ENCODE measurements at regions of chr4 and their contacts with region 1.

Region 1: DNA sequence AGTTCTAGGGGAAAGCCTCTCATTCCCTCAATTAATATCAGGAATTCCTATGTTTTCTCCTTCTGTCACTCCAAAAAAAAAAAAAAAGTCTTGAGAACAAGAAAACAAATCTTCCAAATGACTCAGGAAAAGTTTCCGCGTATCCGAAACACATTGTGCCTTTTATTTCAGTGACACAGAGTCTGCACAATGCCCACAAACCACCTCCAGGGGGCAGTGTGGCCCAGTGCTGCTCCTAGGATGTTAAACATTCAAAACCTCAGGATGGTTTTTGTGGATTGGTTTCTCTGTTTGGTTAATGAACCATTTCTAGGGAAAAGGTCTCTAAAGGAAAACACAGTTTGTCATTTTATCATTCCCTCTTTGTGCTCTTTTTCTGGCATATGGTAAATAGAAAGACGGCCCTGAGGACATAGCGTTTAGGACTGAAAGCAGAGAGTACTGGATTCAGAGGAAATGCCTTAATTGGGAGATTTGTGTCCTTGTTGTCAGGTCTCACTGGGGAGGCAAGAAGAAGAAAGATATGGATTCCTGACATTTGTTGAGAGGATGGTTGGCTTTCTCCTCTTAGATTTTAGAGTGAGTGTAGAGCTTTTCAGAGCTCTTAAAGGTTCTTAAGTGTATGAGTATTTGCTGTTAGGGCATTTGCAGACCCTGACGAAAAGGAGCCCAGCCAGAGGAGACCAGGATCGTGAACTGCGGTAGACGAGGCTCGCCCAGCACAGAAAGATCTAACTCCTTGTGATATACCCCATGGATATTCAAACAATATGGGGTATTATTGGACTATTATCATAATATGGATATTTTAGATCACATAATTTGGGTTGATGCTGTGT is 65.7 kb upstream of the MAP9 start:
- DNase-seq: peak; percentile 76 to 90 (median 85)
- ATAC-seq: peak; percentile 76 to 95 (median 88)
- H3K4me3 ChIP-seq: peak overlapping the region in 9 of 12 donors; percentile 17 to 52 (median 33)
- H3K27ac ChIP-seq: peak overlapping the region in 10 of 12 donors; percentile 22 to 72 (median 38)
- H3K4me1 ChIP-seq: peaks cover 0 to 14% (median 3%) of the 10 kb centered on the region in 12 donors
- H3K27me3 ChIP-seq: no peaks in the 10 kb centered on the region
- CTCF ChIP-seq: peak; percentile 91 to 99 (median 97)
- POLR2A ChIP-seq: no peak

Region 2: DNA sequence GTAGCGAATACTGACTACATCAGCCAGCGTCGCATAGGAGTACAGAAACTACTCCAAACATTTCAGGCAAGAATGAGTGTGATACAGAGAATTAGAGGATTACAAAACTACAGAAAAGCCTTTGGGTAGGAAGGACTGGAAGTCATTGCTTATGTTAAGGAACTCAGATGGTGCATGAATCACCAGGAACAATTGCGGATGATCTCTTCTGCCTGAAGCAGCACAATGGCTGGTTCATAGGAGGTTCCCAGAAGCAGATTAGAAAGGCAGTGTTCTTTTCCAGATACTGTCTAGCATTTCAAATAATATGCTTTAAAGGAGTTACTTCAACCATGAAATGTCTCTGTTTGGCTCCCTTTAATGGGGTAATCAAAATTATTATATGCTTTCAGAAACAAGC is 23.2 kb before region 1 on chr4:
- intact Hi-C with region 1: no loop called
- DNase-seq: no peak
- ATAC-seq: no peak
- H3K4me3 ChIP-seq: no peak overlapping the region
- H3K27ac ChIP-seq: no peak overlapping the region
- H3K4me1 ChIP-seq: peaks cover 0 to 8% (median 0%) of the 10 kb centered on the region in 12 donors
- H3K27me3 ChIP-seq: no peaks in the 10 kb centered on the region
- CTCF ChIP-seq: no peak
- POLR2A ChIP-seq: no peak

Region 3: DNA sequence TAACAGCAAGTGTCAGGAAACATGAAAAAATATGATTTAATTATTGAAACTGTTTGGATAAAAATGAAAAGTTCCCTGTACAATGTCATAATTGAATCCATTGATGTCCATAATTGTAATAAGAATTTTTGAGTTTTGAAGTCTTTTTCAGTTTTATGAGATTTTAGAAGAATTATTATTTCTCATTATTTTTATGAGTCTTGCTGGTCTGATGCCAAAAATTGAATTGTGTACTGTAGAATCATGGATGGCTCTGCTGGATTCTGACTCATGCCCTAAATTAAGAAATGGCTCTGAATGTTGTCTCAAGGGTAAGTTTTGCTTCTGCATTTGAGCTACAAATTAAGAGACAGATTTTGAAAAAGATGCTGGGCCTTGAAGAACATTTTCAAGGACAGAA is 67.1 kb after region 1 on chr4:
- intact Hi-C with region 1: loop called in 2 of 10 experiments (anchors 5 kb)
- DNase-seq: no peak
- ATAC-seq: peak in 3 of 4 donors; percentile 49 to 79 (median 62)
- H3K4me3 ChIP-seq: no peak overlapping the region
- H3K27ac ChIP-seq: peak overlapping the region in 11 of 12 donors; percentile 5 to 75 (median 57)
- H3K4me1 ChIP-seq: peaks cover 0 to 77% (median 39%) of the 10 kb centered on the region in 12 donors
- H3K27me3 ChIP-seq: no peaks in the 10 kb centered on the region
- CTCF ChIP-seq: no peak
- POLR2A ChIP-seq: no peak

Region 4: GRCh38 chr4:155529272-155529671 is 86.8 kb after region 1 on chr4:
- intact Hi-C with region 1: loop called in 1 of 10 experiments (anchors 5 kb)
- DNase-seq: no peak
- ATAC-seq: no peak
- H3K4me3 ChIP-seq: no peak overlapping the region
- H3K27ac ChIP-seq: no peak overlapping the region
- H3K4me1 ChIP-seq: peaks cover 0 to 47% (median 13%) of the 10 kb centered on the region in 12 donors
- H3K27me3 ChIP-seq: no peaks in the 10 kb centered on the region
- CTCF ChIP-seq: peak in 5 of 12 donors; percentile 10 to 45 (median 21)
- POLR2A ChIP-seq: no peak

Region 5: GRCh38 chr4:155657169-155657568 is 214.7 kb after region 1 on chr4:
- intact Hi-C with region 1: loop called in 3 of 10 experiments (anchors 5 to 10 kb)
- DNase-seq: no peak
- ATAC-seq: no peak
- H3K4me3 ChIP-seq: no peak overlapping the region
- H3K27ac ChIP-seq: no peak overlapping the region
- H3K4me1 ChIP-seq: peaks cover 0 to 17% (median 7%) of the 10 kb centered on the region in 12 donors
- H3K27me3 ChIP-seq: no peaks in the 10 kb centered on the region
- CTCF ChIP-seq: no peak
- POLR2A ChIP-seq: no peak

Region 6: GRCh38 chr4:155758481-155759404 is 316.3 kb after region 1 on chr4 and contains the start of gene GUCY1B1:
- intact Hi-C with region 1: loop called in 1 of 10 experiments (anchors 2 kb)
- DNase-seq: peak; percentile 97 to 98 (median 97)
- ATAC-seq: peak; percentile 99
- H3K4me3 ChIP-seq: peak within 1 kb of the TSS; percentile 58 to 90 (median 83)
- H3K27ac ChIP-seq: peak within 1 kb of the TSS; percentile 74 to 95 (median 90)
- H3K4me1 ChIP-seq: peaks cover 0 to 27% (median 5%) of the 10 kb centered on the region in 12 donors
- H3K27me3 ChIP-seq: peaks cover 0 to 6% (median 0%) of the 10 kb centered on the region in 9 donors
- CTCF ChIP-seq: peak; percentile 26 to 76 (median 48)
- POLR2A ChIP-seq: peak in 1 of 2 donors; percentile 67
- total RNA-seq, gene GUCY1B1: 14.6 to 30.7 (median 18.7) TPM

Region 7: DNA sequence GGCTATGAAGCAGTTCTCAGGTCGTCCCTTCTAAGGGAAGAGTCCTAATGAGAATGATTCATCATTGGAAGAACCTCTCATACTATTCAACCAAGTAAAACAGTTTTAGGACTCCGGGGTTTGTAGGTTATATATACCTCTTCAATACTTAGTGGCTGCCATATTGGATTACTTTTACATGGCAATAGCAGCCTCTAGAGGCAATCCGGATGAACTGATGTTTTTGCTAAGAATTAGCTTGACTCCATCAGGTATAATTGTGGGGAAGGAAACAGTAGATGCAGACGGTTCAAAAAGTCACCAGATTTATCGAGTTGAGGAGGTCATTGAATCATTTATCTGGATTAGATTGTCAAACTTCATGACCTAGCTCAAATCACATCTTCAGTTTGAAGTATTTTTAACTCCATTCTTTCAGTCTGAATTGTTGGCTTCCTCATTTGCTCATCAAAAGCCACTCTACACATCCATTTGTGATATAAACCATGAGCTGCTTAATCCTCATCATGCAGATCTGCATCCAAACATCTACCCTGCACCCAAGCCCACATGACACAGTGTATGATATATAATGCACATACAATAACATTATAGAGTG is 344.7 kb after region 1 on chr4:
- intact Hi-C with region 1: loop called (anchors 1 to 5 kb)
- DNase-seq: no peak
- ATAC-seq: peak; percentile 38 to 91 (median 86)
- H3K4me3 ChIP-seq: no peak overlapping the region
- H3K27ac ChIP-seq: no peak overlapping the region
- H3K4me1 ChIP-seq: peaks cover 0 to 40% (median 7%) of the 10 kb centered on the region in 12 donors
- H3K27me3 ChIP-seq: no peaks in the 10 kb centered on the region
- CTCF ChIP-seq: peak; percentile 54 to 88 (median 76)
- POLR2A ChIP-seq: no peak

Region 8: GRCh38 chr4:155807021-155807420 is 364.5 kb after region 1 on chr4:
- intact Hi-C with region 1: no loop called
- DNase-seq: no peak
- ATAC-seq: no peak
- H3K4me3 ChIP-seq: no peak overlapping the region
- H3K27ac ChIP-seq: peak overlapping the region in 1 of 12 donors; percentile 75
- H3K4me1 ChIP-seq: no peaks in the 10 kb centered on the region
- H3K27me3 ChIP-seq: no peaks in the 10 kb centered on the region
- CTCF ChIP-seq: no peak
- POLR2A ChIP-seq: no peak